Naive thymus-derived CD4-positive, alpha-beta T cell (primary cell): ENCODE measurements at regions of chr12 and their contacts with region 1.

Region 1: GRCh38 chr12:104108755-104109445 is 29.1 kb downstream of the NFYB start:
- DNase-seq: peak; percentile 65 to 87 (median 82)
- ATAC-seq: peak; percentile 99
- H3K4me3 ChIP-seq: no peak overlapping the region
- H3K4me3 Mint-ChIP-seq: peak overlapping the region in 8 of 10 donors; percentile 13 to 77 (median 59)
- H3K27ac ChIP-seq: no peak overlapping the region
- H3K27ac Mint-ChIP-seq: peak overlapping the region in 8 of 9 donors; percentile 0 to 82 (median 37)
- H3K4me1 ChIP-seq: peaks cover 4 to 6% of the 10 kb centered on the region in 2 donors
- H3K4me1 Mint-ChIP-seq: peaks cover 6 to 19% (median 10%) of the 10 kb centered on the region in 7 donors
- H3K27me3 ChIP-seq: no peaks in the 10 kb centered on the region
- H3K27me3 Mint-ChIP-seq: no peaks in the 10 kb centered on the region

Region 2: GRCh38 chr12:103626498-103626897 is 482.4 kb before region 1 on chr12:
- CTCF ChIA-PET with region 1: interaction called, 3 read pairs
- POLR2A ChIA-PET with region 1: no interaction called
- intact Hi-C with region 1: loop called in 1 of 2 experiments (anchors 2 kb)
- DNase-seq: peak in 1 of 9 donors; percentile 7
- ATAC-seq: no peak
- H3K4me3 ChIP-seq: no peak overlapping the region
- H3K4me3 Mint-ChIP-seq: no peak overlapping the region
- H3K27ac ChIP-seq: no peak overlapping the region
- H3K27ac Mint-ChIP-seq: no peak overlapping the region
- H3K4me1 ChIP-seq: no peaks in the 10 kb centered on the region
- H3K4me1 Mint-ChIP-seq: peaks cover 0 to 2% (median 0%) of the 10 kb centered on the region in 7 donors
- H3K27me3 ChIP-seq: no peaks in the 10 kb centered on the region
- H3K27me3 Mint-ChIP-seq: peaks cover 0 to 7% (median 0%) of the 10 kb centered on the region in 5 donors

Region 3: GRCh38 chr12:103884316-103884715 is 224.6 kb before region 1 on chr12:
- CTCF ChIA-PET with region 1: interaction called, 26 read pairs
- POLR2A ChIA-PET with region 1: interaction called, 4 read pairs
- intact Hi-C with region 1: loop called (anchors 1 kb)
- DNase-seq: peak in 7 of 9 donors; percentile 36 to 68 (median 53)
- ATAC-seq: peak; percentile 68
- H3K4me3 ChIP-seq: no peak overlapping the region
- H3K4me3 Mint-ChIP-seq: peak overlapping the region in 3 of 10 donors; percentile 30 to 64 (median 39)
- H3K27ac ChIP-seq: no peak overlapping the region
- H3K27ac Mint-ChIP-seq: peak overlapping the region in 6 of 9 donors; percentile 19 to 74 (median 46)
- H3K4me1 ChIP-seq: no peaks in the 10 kb centered on the region
- H3K4me1 Mint-ChIP-seq: peaks cover 4 to 24% (median 16%) of the 10 kb centered on the region in 7 donors
- H3K27me3 ChIP-seq: no peaks in the 10 kb centered on the region
- H3K27me3 Mint-ChIP-seq: no peaks in the 10 kb centered on the region

Region 4: DNA sequence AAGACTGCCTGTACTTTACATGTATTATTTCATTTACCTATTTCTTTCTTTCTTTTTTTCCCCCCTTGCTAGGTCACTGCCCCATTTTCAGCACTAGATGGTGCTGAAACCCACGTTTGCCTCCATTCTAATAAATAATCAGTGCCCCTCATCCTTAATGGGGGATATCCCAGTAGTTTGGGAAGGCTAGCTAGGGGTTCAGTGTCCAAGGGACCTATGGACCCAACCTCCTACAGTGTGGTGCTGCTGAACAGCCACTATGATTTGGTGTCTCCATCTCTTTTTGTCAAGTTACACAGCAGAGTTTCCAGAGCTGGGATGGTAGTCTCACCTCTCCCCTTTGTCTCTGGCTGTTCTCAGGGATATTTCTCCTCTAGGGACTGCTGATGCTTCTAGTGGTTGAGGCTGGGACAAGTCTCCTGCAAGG is 51.1 kb before region 1 on chr12:
- CTCF ChIA-PET with region 1: interaction called, 46 read pairs
- POLR2A ChIA-PET with region 1: interaction called, 4 read pairs
- intact Hi-C with region 1: loop called (anchors 1 kb)
- DNase-seq: peak in 5 of 9 donors; percentile 1 to 16 (median 13)
- ATAC-seq: peak; percentile 60
- H3K4me3 ChIP-seq: no peak overlapping the region
- H3K4me3 Mint-ChIP-seq: no peak overlapping the region
- H3K27ac ChIP-seq: no peak overlapping the region
- H3K27ac Mint-ChIP-seq: no peak overlapping the region
- H3K4me1 ChIP-seq: no peaks in the 10 kb centered on the region
- H3K4me1 Mint-ChIP-seq: no peaks in the 10 kb centered on the region
- H3K27me3 ChIP-seq: no peaks in the 10 kb centered on the region
- H3K27me3 Mint-ChIP-seq: peaks cover 31 to 70% (median 39%) of the 10 kb centered on the region in 5 donors

Region 5: GRCh38 chr12:104097954-104098353 is 10.9 kb before region 1 on chr12:
- CTCF ChIA-PET with region 1: interaction called, 11 read pairs
- POLR2A ChIA-PET with region 1: no interaction called
- intact Hi-C with region 1: no loop called
- DNase-seq: no peak
- ATAC-seq: no peak
- H3K4me3 ChIP-seq: no peak overlapping the region
- H3K4me3 Mint-ChIP-seq: no peak overlapping the region
- H3K27ac ChIP-seq: no peak overlapping the region
- H3K27ac Mint-ChIP-seq: no peak overlapping the region
- H3K4me1 ChIP-seq: no peaks in the 10 kb centered on the region
- H3K4me1 Mint-ChIP-seq: no peaks in the 10 kb centered on the region
- H3K27me3 ChIP-seq: no peaks in the 10 kb centered on the region
- H3K27me3 Mint-ChIP-seq: no peaks in the 10 kb centered on the region

Region 6: DNA sequence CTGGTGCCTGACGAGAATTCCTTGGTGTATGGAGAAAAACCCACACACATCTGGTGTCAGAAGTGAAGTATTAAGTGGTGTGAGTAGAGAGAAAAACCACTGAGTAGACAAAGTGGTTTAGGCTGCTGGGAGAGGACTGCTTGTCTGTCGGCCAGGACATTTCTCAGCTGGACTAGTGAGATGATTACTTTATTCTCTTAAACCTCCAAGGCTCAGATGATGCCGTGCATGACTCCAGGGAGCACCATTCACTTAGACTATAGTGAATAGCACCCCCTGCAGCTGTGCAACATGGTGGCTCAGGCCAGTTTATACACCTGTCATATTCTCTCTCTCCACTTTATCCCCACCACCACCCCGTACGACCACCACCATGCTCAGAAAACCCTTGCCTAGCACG is 57.6 kb after region 1 on chr12:
- CTCF ChIA-PET with region 1: no interaction called
- POLR2A ChIA-PET with region 1: no interaction called
- intact Hi-C with region 1: no loop called
- DNase-seq: no peak
- ATAC-seq: no peak
- H3K4me3 ChIP-seq: no peak overlapping the region
- H3K4me3 Mint-ChIP-seq: no peak overlapping the region
- H3K27ac ChIP-seq: no peak overlapping the region
- H3K27ac Mint-ChIP-seq: no peak overlapping the region
- H3K4me1 ChIP-seq: no peaks in the 10 kb centered on the region
- H3K4me1 Mint-ChIP-seq: no peaks in the 10 kb centered on the region
- H3K27me3 ChIP-seq: no peaks in the 10 kb centered on the region
- H3K27me3 Mint-ChIP-seq: peaks cover 0 to 16% (median 5%) of the 10 kb centered on the region in 5 donors

Region 7: GRCh38 chr12:104243551-104243950 is 134.7 kb after region 1 on chr12:
- CTCF ChIA-PET with region 1: no interaction called
- POLR2A ChIA-PET with region 1: no interaction called
- intact Hi-C with region 1: no loop called
- DNase-seq: no peak
- ATAC-seq: no peak
- H3K4me3 ChIP-seq: no peak overlapping the region
- H3K4me3 Mint-ChIP-seq: no peak overlapping the region
- H3K27ac ChIP-seq: no peak overlapping the region
- H3K27ac Mint-ChIP-seq: no peak overlapping the region
- H3K4me1 ChIP-seq: no peaks in the 10 kb centered on the region
- H3K4me1 Mint-ChIP-seq: no peaks in the 10 kb centered on the region
- H3K27me3 ChIP-seq: peaks cover 0 to 10% of the 10 kb centered on the region in 2 donors
- H3K27me3 Mint-ChIP-seq: peaks cover 0 to 17% (median 0%) of the 10 kb centered on the region in 5 donors